Heart left ventricle (tissue), 16 donors: ENCODE measurements at regions of chr1 and their contacts with region 1.

Region 1: GRCh38 chr1:114511032-114511785 is at the start of gene TRIM33:
- DNase-seq: peak; percentile 91 to 96 (median 94)
- ATAC-seq: peak; percentile 94 to 96 (median 95)
- H3K4me3 ChIP-seq: peak within 1 kb of the TSS; percentile 76 to 100 (median 96)
- H3K27ac ChIP-seq: peak within 1 kb of the TSS; percentile 63 to 99 (median 96)
- H3K4me1 ChIP-seq: peaks cover 0 to 45% (median 31%) of the 10 kb centered on the region in 12 donors
- H3K27me3 ChIP-seq: no peaks in the 10 kb centered on the region
- CTCF ChIP-seq: peak in 2 of 12 donors; percentile 7 to 10
- POLR2A ChIP-seq: peak in 1 of 2 donors; percentile 76
- total RNA-seq, gene TRIM33: 12.1 to 30.8 (median 21.4) TPM

Region 2: DNA sequence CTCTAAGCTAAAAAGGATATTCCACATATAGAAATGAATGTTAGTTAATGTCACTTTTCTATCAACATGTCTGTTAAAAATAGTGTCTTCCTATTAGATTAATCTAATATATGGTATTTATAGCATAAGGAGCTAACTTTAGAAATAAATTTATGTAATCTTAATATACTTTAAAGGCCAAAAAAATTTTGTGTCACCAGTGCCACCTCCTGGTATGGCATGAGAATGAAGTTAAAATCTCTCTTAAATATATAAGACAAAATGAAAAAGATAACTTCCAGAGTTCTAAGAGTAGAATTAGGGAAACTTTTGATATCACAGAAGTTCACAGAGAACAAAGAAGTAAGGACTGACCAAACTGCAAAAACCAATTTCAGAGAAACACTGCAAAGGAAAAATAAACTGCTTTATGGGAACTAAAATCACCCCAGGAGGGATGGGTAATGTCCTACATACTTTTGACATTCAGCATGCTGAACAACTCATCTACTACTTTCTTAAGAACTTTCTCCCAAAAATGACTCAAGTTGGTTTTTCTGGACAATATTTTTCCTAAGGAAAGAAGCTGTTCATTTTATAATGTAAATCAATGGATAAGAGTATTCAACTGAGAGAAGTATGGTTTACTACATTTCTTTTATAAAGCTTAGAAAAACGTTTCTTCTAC is 83.0 kb before region 1 on chr1:
- intact Hi-C with region 1: loop called in 3 of 10 experiments (anchors 5 kb)
- DNase-seq: no peak
- ATAC-seq: no peak
- H3K4me3 ChIP-seq: no peak overlapping the region
- H3K27ac ChIP-seq: peak overlapping the region in 5 of 12 donors; percentile 7 to 17 (median 11)
- H3K4me1 ChIP-seq: peaks cover 0 to 24% (median 2%) of the 10 kb centered on the region in 12 donors
- H3K27me3 ChIP-seq: no peaks in the 10 kb centered on the region
- CTCF ChIP-seq: peak; percentile 12 to 59 (median 42)
- POLR2A ChIP-seq: no peak

Region 3: DNA sequence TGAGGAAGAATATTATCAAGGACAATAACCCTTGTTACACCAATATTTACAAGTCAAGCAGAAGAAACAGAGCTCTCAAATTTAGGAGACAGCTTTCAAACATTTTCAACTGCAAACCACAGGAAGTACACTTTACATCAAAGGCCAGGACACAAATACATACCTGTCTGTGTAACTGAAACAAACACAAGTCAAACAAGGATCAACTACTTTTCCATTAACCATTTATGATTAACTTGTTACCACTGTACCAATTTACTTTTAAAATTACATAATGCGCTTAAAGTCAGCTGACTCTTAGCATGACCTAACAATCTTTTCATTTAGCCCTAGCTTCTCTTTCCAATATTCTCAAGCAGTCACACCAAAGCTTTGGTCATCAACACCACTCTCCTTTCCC is 43.7 kb before region 1 on chr1:
- intact Hi-C with region 1: no loop called
- DNase-seq: no peak
- ATAC-seq: no peak
- H3K4me3 ChIP-seq: no peak overlapping the region
- H3K27ac ChIP-seq: peak overlapping the region in 1 of 12 donors; percentile 21
- H3K4me1 ChIP-seq: peaks cover 0 to 34% (median 18%) of the 10 kb centered on the region in 12 donors
- H3K27me3 ChIP-seq: no peaks in the 10 kb centered on the region
- CTCF ChIP-seq: no peak
- POLR2A ChIP-seq: no peak

Region 4: GRCh38 chr1:114575532-114575931 is 64.3 kb after region 1 on chr1:
- intact Hi-C with region 1: loop called in 4 of 10 experiments (anchors 2 to 5 kb)
- DNase-seq: no peak
- ATAC-seq: no peak
- H3K4me3 ChIP-seq: no peak overlapping the region
- H3K27ac ChIP-seq: no peak overlapping the region
- H3K4me1 ChIP-seq: peaks cover 0 to 25% (median 13%) of the 10 kb centered on the region in 12 donors
- H3K27me3 ChIP-seq: no peaks in the 10 kb centered on the region
- CTCF ChIP-seq: no peak
- POLR2A ChIP-seq: no peak

Region 5: GRCh38 chr1:114581335-114582287 is 70.4 kb after region 1 on chr1 and contains the start of gene BCAS2:
- intact Hi-C with region 1: loop called in 5 of 10 experiments (anchors 2 to 5 kb)
- DNase-seq: peak; percentile 95 to 98 (median 97)
- ATAC-seq: peak; percentile 98 to 99 (median 99)
- H3K4me3 ChIP-seq: peak within 1 kb of the TSS; percentile 41 to 89 (median 68)
- H3K27ac ChIP-seq: peak within 1 kb of the TSS; percentile 68 to 95 (median 88)
- H3K4me1 ChIP-seq: peaks cover 0 to 37% (median 22%) of the 10 kb centered on the region in 12 donors
- H3K27me3 ChIP-seq: no peaks in the 10 kb centered on the region
- CTCF ChIP-seq: no peak
- POLR2A ChIP-seq: peak in 1 of 2 donors; percentile 88
- total RNA-seq, gene BCAS2: 28.7 to 41.6 (median 34.4) TPM

Region 6: DNA sequence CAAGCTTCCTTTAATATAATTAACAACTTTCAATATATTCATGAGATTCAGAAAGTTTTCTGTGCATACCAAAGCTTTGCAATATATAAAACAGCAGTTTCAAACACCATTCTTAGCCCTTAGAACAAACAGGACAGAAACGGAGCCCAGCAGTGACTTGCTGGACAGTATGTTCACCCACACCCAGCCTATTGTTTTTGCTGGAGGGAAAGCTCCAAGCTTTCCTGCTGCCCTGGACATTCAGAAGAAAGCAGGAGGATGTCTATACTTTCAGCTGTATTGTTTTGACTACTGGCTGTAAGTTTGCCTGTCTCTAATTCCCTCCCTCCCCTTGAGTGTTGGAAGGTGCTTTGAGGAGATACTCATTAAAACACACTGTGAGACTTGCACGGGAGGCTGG is 149.0 kb after region 1 on chr1:
- intact Hi-C with region 1: loop called in 1 of 10 experiments (anchors 5 kb)
- DNase-seq: no peak
- ATAC-seq: peak in 1 of 4 donors; percentile 26
- H3K4me3 ChIP-seq: no peak overlapping the region
- H3K27ac ChIP-seq: no peak overlapping the region
- H3K4me1 ChIP-seq: peaks cover 0 to 9% (median 0%) of the 10 kb centered on the region in 12 donors
- H3K27me3 ChIP-seq: no peaks in the 10 kb centered on the region
- CTCF ChIP-seq: no peak
- POLR2A ChIP-seq: no peak

Region 7: DNA sequence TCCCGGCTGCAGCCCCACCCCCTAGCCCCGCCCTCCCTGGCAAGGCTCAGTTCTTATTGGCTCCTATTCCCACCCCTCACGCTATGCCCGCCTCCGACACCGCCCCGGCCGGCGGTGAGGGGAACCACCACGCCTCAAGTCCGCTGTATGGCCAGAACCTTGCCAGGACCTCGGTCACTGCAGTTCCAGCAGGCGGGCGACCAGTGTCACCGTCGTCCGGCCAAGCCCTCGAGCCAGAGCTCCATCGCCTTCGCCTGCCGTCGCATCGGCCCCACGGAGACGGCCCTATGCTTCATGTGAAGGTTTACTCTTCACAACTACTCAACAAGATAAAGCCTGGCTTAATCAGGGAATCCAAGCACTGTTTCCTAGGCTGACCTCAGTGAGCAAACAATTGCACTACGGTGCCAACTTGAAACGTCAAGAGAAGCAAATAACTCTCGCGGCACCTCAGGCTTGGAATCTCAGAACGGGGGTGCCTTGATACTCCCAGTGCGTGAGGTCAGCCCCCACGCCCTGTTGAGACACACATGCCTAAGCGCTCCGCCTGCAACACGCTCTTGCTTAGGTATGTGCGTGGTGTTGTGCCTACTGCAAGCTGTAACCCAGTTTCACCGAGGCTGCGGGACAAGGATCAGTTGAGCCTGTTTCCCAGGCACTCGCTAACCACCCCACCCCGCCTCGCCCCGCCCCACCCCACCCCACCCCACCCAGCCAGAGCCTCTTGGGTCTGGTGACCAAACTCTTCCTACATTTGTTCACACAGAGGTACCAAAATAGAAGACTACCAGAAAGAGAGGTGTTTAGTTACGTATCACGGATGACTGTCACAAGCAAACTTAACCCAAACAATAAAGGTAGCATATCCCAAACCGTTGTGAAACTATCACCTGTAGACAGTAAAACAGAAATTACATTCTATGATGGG is 159.1 kb after region 1 on chr1:
- intact Hi-C with region 1: loop called in 1 of 10 experiments (anchors 2 kb)
- DNase-seq: peak; percentile 95 to 96 (median 95)
- ATAC-seq: peak; percentile 99 to 100 (median 100)
- H3K4me3 ChIP-seq: peak overlapping the region; percentile 45 to 96 (median 76)
- H3K27ac ChIP-seq: peak overlapping the region in 11 of 12 donors; percentile 70 to 91 (median 83)
- H3K4me1 ChIP-seq: peaks cover 0 to 17% (median 4%) of the 10 kb centered on the region in 12 donors
- H3K27me3 ChIP-seq: peaks cover 0 to 4% (median 0%) of the 10 kb centered on the region in 9 donors
- CTCF ChIP-seq: peak in 8 of 12 donors; percentile 8 to 35 (median 23)
- POLR2A ChIP-seq: peak; percentile 49 to 87

Region 8: DNA sequence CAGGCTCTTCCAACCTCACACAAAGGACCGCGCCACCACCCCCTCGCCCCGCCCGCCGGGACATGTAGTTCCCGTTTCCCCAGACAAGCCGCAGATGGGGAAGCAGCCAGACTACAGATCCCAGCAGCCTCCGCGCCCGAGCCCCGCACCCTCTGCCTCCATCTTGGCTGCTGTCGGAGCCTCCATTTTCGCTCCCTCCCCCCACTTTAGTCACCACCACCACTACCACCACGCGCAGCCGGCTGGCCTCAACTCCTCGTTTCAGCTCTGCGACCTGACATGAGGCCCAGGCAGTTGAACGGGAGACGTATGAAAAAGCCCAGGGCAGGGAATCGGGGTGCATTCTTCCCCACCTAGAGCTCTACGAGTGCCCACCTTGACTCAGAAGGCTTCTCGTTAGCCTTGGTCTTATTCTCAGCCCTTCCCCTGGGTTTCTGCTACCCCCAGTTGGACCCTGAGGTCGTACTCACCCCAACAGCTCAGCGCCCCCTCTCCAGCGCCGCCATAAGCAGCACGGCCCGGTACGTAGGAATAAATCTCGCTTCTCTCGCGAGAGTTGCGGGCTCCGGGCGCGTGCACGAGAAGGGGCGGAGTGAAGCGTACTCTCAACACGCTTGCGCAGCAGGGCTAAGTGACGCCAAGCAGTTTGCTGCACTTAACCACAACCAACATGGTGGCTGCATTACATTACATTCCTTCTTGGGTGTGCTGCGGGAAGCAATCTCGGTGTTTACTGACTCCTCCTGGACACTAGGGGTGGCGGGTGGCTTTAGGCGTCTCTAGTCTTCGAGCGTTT is 246.4 kb after region 1 on chr1 and contains the start of gene CSDE1:
- intact Hi-C with region 1: loop called in 2 of 10 experiments (anchors 2 to 5 kb)
- DNase-seq: peak; percentile 97 to 98 (median 98)
- ATAC-seq: peak; percentile 96 to 97 (median 97)
- H3K4me3 ChIP-seq: peak within 1 kb of the TSS; percentile 81 to 99 (median 92)
- H3K27ac ChIP-seq: peak within 1 kb of the TSS; percentile 92 to 100 (median 99)
- H3K4me1 ChIP-seq: peaks cover 18 to 52% (median 41%) of the 10 kb centered on the region in 12 donors
- H3K27me3 ChIP-seq: no peaks in the 10 kb centered on the region
- CTCF ChIP-seq: peak in 11 of 12 donors; percentile 16 to 59 (median 40)
- POLR2A ChIP-seq: peak in 1 of 2 donors; percentile 90
- total RNA-seq, gene CSDE1: 714 to 1,317 (median 905) TPM